CD14-positive monocyte (primary cell): ENCODE measurements at regions of chr6 and their contacts with region 1.

Region 1: DNA sequence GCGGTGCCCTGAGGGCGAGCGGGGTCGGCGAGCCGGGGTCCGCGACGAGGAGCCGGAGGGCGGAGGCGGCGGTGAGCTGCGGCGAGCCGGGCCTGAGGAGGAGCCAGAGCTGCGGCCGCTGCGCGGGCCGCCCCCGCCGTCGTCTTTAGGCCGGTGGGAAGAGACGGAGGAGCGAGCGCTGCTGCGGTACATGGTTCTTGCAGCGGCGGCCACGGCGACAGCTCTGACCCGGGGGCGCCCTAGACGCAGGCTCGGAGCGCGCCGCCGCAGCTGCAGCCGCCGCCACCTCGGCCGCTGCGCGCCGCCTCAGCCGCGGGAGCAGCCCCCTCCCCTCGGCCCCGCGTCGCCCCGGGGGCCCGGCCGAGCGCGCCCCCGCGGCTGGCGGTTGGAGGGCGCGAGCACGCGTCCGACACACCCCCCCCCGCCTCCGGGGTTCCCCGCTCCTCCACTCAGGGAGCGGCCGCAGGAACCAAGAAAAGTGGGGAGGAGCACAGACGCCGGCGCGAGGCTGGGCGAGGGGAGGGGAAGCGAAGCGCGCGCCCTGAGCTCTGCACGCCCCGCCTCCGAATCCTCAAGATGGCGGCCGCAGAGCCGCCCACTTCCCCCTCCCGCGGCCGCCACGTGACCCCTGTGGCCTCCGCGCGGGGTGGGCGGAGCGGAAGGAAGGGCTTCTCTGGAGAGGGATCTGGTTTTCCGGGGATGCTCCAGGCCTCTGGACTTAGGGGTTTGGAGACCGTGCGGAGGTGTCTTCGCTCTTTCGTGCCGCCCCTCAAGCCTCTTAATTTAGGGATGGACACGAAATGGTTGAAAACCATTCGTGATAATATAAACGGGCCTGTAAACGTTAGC is at the start of gene ZNF318:
- DNase-seq: peak; percentile 96 to 97 (median 96)
- H3K4me3 ChIP-seq: peak within 1 kb of the TSS; percentile 57 to 89 (median 58)
- H3K4me3 Mint-ChIP-seq: peak within 1 kb of the TSS; percentile 89 to 94
- H3K27ac ChIP-seq: peak within 1 kb of the TSS; percentile 61 to 94
- H3K27ac Mint-ChIP-seq: peak within 1 kb of the TSS; percentile 84 to 98 (median 96)
- H3K4me1 ChIP-seq: peaks cover 22 to 30% of the 10 kb centered on the region in 2 donors
- H3K4me1 Mint-ChIP-seq: peaks cover 33% of the 10 kb centered on the region
- H3K27me3 ChIP-seq: no peaks in the 10 kb centered on the region
- H3K27me3 Mint-ChIP-seq: peaks cover 7 to 15% (median 11%) of the 10 kb centered on the region in 3 donors
- CTCF ChIP-seq: no peak
- polyA plus RNA-seq, gene ZNF318: 3.2 to 19.4 (median 3.6) TPM

Region 2: GRCh38 chr6:43427406-43428111 is 58.2 kb after region 1 on chr6 and contains the start of gene ABCC10:
- intact Hi-C with region 1: loop called (anchors 5 kb)
- DNase-seq: peak; percentile 91 to 97 (median 94)
- H3K4me3 ChIP-seq: peak within 1 kb of the TSS; percentile 74 to 88 (median 86)
- H3K4me3 Mint-ChIP-seq: peak within 1 kb of the TSS; percentile 92 to 95
- H3K27ac ChIP-seq: peak within 1 kb of the TSS; percentile 76 to 93
- H3K27ac Mint-ChIP-seq: peak within 1 kb of the TSS; percentile 94 to 99 (median 98)
- H3K4me1 ChIP-seq: peaks cover 16 to 21% of the 10 kb centered on the region in 2 donors
- H3K4me1 Mint-ChIP-seq: peaks cover 18% of the 10 kb centered on the region
- H3K27me3 ChIP-seq: peaks cover 0 to 4% of the 10 kb centered on the region in 2 donors
- H3K27me3 Mint-ChIP-seq: peaks cover 0 to 15% (median 0%) of the 10 kb centered on the region in 3 donors
- CTCF ChIP-seq: peak; percentile 28
- polyA plus RNA-seq, gene ABCC10: 7.6 to 32.8 (median 10.2) TPM

Region 3: GRCh38 chr6:43516697-43517504 is 147.5 kb after region 1 on chr6 and contains the starts of genes POLR1C and YIPF3:
- intact Hi-C with region 1: loop called in 1 of 2 experiments (anchors 10 kb)
- DNase-seq: peak; percentile 98 to 100 (median 98)
- H3K4me3 ChIP-seq: peak within 1 kb of the TSS; percentile 61 to 100 (median 78)
- H3K4me3 Mint-ChIP-seq: no peak within 1 kb of the TSS
- H3K27ac ChIP-seq: peak within 1 kb of the TSS; percentile 35 to 93
- H3K27ac Mint-ChIP-seq: peak within 1 kb of the TSS in 1 of 7 donors; percentile 55
- H3K4me1 ChIP-seq: peaks cover 23 to 36% of the 10 kb centered on the region in 2 donors
- H3K4me1 Mint-ChIP-seq: peaks cover 31% of the 10 kb centered on the region
- H3K27me3 ChIP-seq: no peaks in the 10 kb centered on the region
- H3K27me3 Mint-ChIP-seq: no peaks in the 10 kb centered on the region
- CTCF ChIP-seq: no peak
- polyA plus RNA-seq, gene POLR1C: 4.5 to 18.3 (median 6.1) TPM
- polyA plus RNA-seq, gene YIPF3: 112 to 126 (median 123) TPM